H1 (cell line): ENCODE measurements at regions of chr17 and their contacts with region 1.

Region 1: GRCh38 chr17:73645050-73645978 is 1.1 kb upstream of the SDK2 start:
- DNase-seq: no peak
- H3K4me3 ChIP-seq: peak overlapping the region; percentile 67 to 87 (median 80)
- H3K27ac ChIP-seq: no peak overlapping the region
- H3K4me1 ChIP-seq: peaks cover 4 to 19% (median 12%) of the 10 kb centered on the region in 4 experiments
- H3K27me3 ChIP-seq: peaks cover 5 to 47% (median 37%) of the 10 kb centered on the region in 4 experiments
- CTCF ChIP-seq: peak in 1 of 3 experiments; percentile 35; a peak in 2 of 4 replicates
- EP300 ChIP-seq: peak in 1 of 2 experiments; percentile 72; a peak in 1 of 3 replicates
- POLR2A ChIP-seq: no peak
- RAD21 ChIP-seq: peak in 1 of 2 experiments; percentile 3; a peak in 3 of 4 replicates

Region 2: GRCh38 chr17:73586921-73587602 is 58.3 kb before region 1 on chr17:
- CTCF ChIA-PET with region 1: interaction called, 56 read pairs
- POLR2A ChIA-PET with region 1: no interaction called
- DNase-seq: no peak
- H3K4me3 ChIP-seq: no peak overlapping the region; a peak in 1 of 8 replicates
- H3K27ac ChIP-seq: no peak overlapping the region
- H3K4me1 ChIP-seq: peaks cover 0 to 37% (median 13%) of the 10 kb centered on the region in 4 experiments; a peak in 6 of 7 replicates
- H3K27me3 ChIP-seq: no peaks in the 10 kb centered on the region; a peak in 1 of 7 replicates
- CTCF ChIP-seq: no peak
- EP300 ChIP-seq: no peak
- POLR2A ChIP-seq: no peak
- RAD21 ChIP-seq: no peak; a peak in 1 of 4 replicates

Region 3: DNA sequence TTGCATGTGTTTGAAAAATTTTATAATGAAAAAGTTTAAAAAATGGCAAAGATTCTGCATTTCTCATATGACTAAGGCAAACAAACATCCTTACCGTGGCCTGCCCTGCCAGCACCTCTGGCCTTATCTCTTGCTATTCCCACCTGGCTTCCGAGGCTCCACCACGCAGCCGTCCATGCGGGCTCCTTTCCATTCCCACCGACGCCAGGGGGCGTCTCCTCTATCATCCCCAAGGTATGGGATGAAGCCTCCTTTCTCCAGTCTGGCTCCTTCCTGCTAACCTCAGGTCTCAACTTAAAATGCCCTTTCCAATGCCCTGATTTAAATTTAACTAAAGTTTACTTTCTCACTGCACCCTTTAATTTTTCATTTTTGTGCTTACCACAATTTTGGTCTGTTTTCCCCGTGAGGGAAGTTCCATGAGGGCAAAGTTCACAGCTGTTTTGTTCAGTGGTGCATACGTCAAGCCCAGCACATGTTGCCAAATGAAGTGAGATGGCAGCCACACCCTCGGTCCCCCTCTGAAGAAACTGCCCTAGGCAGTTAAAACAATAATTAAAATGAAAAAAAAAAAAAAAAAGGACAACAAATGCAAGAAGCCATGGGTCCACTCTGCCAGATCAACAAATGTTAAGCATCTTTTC is 12.3 kb after region 1 on chr17:
- CTCF ChIA-PET with region 1: interaction called, 25 read pairs
- POLR2A ChIA-PET with region 1: no interaction called
- DNase-seq: peak in 1 of 2 experiments; percentile 89
- H3K4me3 ChIP-seq: no peak overlapping the region
- H3K27ac ChIP-seq: no peak overlapping the region
- H3K4me1 ChIP-seq: no peaks in the 10 kb centered on the region; a peak in 2 of 7 replicates
- H3K27me3 ChIP-seq: no peaks in the 10 kb centered on the region
- CTCF ChIP-seq: peak; percentile 83 to 89 (median 87)
- EP300 ChIP-seq: no peak
- POLR2A ChIP-seq: no peak
- RAD21 ChIP-seq: peak; percentile 70 to 80

Region 4: GRCh38 chr17:73703192-73703591 is 57.9 kb after region 1 on chr17:
- CTCF ChIA-PET with region 1: interaction called, 175 read pairs
- POLR2A ChIA-PET with region 1: no interaction called
- DNase-seq: no peak
- H3K4me3 ChIP-seq: no peak overlapping the region
- H3K27ac ChIP-seq: no peak overlapping the region
- H3K4me1 ChIP-seq: no peaks in the 10 kb centered on the region; a peak in 2 of 7 replicates
- H3K27me3 ChIP-seq: no peaks in the 10 kb centered on the region
- CTCF ChIP-seq: no peak
- EP300 ChIP-seq: no peak
- POLR2A ChIP-seq: no peak
- RAD21 ChIP-seq: no peak

Region 5: DNA sequence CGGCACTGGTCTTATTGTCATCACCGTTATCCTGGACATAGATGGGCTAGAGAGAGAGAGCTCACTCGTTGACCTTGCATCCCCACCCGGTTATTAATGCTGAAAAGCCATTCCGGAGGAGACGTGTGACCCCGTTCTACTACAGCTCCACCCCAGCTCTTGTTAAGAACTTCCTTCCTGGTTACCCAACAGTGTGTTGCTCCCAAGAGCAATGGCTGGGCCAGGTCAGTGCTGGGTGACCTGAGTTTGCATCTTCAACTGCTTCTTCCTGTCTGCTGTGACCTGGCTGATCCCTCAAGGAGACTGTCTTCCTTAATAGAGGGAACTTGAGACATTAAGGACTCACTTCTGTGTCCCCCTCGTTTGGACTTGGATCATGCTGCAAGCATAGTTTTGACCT is 95.1 kb after region 1 on chr17:
- CTCF ChIA-PET with region 1: no interaction called
- POLR2A ChIA-PET with region 1: no interaction called
- DNase-seq: no peak
- H3K4me3 ChIP-seq: no peak overlapping the region
- H3K27ac ChIP-seq: no peak overlapping the region
- H3K4me1 ChIP-seq: peaks cover 0 to 11% (median 4%) of the 10 kb centered on the region in 4 experiments; a peak in 4 of 7 replicates
- H3K27me3 ChIP-seq: no peaks in the 10 kb centered on the region
- CTCF ChIP-seq: no peak
- EP300 ChIP-seq: no peak
- POLR2A ChIP-seq: no peak
- RAD21 ChIP-seq: no peak

Region 6: DNA sequence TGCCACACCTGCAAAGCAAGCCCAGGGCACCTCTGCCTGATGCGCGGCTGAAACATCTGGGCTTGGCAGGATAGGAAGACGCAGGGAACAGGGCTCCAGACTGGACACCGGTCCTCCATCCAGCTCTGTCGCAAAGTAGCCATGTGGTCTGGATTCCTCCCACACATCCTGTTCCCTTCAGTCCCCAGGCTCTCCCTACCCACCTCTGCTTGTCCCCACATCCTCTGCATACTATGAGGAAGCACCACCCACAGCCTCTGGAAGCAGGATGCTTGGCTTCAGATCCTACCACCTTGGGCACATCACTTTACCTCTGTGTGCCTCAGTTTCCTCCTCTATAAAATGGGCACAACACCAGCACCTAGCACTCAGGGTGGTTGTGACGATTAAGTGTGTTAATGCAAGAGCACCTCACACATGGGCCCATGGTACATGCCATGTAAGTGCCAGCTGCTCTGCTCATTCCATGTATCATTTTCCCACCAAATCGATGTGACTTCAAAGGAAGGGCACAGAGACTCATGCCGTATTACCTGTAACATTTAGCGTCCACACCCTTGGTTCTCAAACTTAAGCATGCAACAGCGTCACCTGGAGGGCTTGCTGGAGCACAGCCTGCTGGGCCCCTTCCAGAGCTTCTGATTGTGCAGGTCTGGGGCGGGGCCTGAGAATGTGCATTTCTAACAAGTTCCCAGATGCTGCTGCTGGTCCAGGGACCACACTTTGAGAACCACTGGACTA is 137.5 kb after region 1 on chr17:
- CTCF ChIA-PET with region 1: interaction called, 44 read pairs
- POLR2A ChIA-PET with region 1: no interaction called
- DNase-seq: no peak
- H3K4me3 ChIP-seq: no peak overlapping the region
- H3K27ac ChIP-seq: no peak overlapping the region
- H3K4me1 ChIP-seq: peaks cover 7 to 32% (median 16%) of the 10 kb centered on the region in 4 experiments
- H3K27me3 ChIP-seq: no peaks in the 10 kb centered on the region; a peak in 1 of 7 replicates
- CTCF ChIP-seq: peak; percentile 70 to 87 (median 86)
- EP300 ChIP-seq: no peak
- POLR2A ChIP-seq: no peak
- RAD21 ChIP-seq: peak; percentile 80 to 90